Activated CD8-positive, alpha-beta T cell treated with anti-CD3 and anti-CD28 coated beads, Interleukin-2, amount 10 ng/mL, durations not matched to agents 7 days and 5 days (primary cell): ENCODE measurements at regions of chr6 and their contacts with region 1.

Region 1: GRCh38 chr6:69796642-69797390 is at the start of gene LMBRD1:
- DNase-seq: peak; percentile 98
- ATAC-seq: peak; percentile 95
- H3K4me3 Mint-ChIP-seq: peak within 1 kb of the TSS; percentile 85
- H3K27ac Mint-ChIP-seq: peak within 1 kb of the TSS; percentile 93
- H3K4me1 Mint-ChIP-seq: peaks cover 39% of the 10 kb centered on the region
- H3K27me3 Mint-ChIP-seq: no peaks in the 10 kb centered on the region
- total RNA-seq, gene LMBRD1: 19.6 to 22.5 TPM

Region 2: GRCh38 chr6:69813508-69813907 is 16.7 kb after region 1 on chr6:
- CTCF ChIA-PET with region 1: interaction called, 132 read pairs
- POLR2A ChIA-PET with region 1: interaction called, 14 read pairs
- DNase-seq: no peak
- ATAC-seq: peak; percentile 47
- H3K4me3 Mint-ChIP-seq: peak overlapping the region; percentile 32
- H3K27ac Mint-ChIP-seq: peak overlapping the region; percentile 51
- H3K4me1 Mint-ChIP-seq: peaks cover 57% of the 10 kb centered on the region
- H3K27me3 Mint-ChIP-seq: no peaks in the 10 kb centered on the region

Region 3: DNA sequence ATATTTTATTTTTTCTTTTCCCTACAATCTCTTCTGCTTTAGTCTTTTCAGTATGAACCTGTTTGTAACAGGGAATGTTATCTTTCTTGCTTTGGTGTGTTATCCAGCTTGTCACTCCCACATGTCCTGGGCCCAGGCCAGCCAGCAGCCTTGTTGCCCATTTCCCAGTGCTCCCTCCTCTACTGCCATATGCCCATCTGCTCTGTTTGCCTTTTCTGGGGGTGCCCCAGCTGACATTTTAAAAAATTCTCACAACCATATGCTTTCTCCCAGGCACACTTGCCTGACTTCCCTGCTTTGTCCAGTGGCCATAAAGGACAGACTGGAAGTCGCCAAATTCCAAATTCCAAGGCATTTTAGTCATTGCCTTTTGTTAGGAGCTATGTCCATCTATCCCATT is 23.6 kb after region 1 on chr6:
- CTCF ChIA-PET with region 1: interaction called, 132 read pairs
- POLR2A ChIA-PET with region 1: interaction called, 12 read pairs
- DNase-seq: no peak
- ATAC-seq: no peak
- H3K4me3 Mint-ChIP-seq: no peak overlapping the region
- H3K27ac Mint-ChIP-seq: no peak overlapping the region
- H3K4me1 Mint-ChIP-seq: peaks cover 21% of the 10 kb centered on the region
- H3K27me3 Mint-ChIP-seq: no peaks in the 10 kb centered on the region